ENCODE measurements at regions of chr5 and their contacts with region 1.

Region 1: DNA sequence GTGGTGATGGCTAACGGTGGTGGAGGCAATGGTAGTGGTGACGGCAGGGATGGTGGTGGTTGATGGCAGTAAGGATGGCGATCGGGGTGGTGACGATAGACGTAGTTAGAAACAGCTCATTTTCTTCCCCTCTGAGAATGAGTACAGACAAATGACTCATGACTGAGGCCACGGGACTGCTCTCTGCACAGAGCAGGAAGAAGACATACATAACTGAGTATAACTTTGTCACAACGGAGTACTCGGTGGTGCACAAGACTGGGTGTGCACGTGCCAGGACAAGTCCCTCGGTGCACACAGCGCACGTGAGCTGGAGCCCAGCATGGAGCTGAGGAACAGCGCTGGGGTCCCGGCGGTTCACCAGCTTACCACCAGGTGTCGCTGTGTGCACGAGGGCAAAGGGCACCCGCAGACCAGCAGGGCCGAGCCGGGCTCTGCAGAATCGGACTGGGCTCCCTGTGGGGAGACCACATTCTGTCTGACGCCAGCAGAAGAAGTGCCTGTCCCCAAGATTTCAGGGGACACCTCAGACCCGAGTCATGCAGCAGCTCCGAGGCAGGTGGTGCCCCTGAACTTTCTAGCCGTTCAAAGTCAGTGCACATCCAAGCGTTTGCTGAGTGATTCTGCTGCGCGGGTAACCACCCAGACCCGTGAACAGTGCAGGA is 188.6 kb downstream of the FSTL4 start:
- DNase-seq: peak in 4 of 5 donors; percentile 18 to 59 (median 35)
- H3K4me3 ChIP-seq: no peak overlapping the region
- H3K27ac ChIP-seq: no peak overlapping the region
- H3K4me1 ChIP-seq: no peaks in the 10 kb centered on the region
- H3K27me3 ChIP-seq: no peaks in the 10 kb centered on the region
- CTCF ChIP-seq: peak in 2 of 3 donors; percentile 24 to 33
- EP300 ChIP-seq: no peak
- POLR2A ChIP-seq: no peak

Region 2: DNA sequence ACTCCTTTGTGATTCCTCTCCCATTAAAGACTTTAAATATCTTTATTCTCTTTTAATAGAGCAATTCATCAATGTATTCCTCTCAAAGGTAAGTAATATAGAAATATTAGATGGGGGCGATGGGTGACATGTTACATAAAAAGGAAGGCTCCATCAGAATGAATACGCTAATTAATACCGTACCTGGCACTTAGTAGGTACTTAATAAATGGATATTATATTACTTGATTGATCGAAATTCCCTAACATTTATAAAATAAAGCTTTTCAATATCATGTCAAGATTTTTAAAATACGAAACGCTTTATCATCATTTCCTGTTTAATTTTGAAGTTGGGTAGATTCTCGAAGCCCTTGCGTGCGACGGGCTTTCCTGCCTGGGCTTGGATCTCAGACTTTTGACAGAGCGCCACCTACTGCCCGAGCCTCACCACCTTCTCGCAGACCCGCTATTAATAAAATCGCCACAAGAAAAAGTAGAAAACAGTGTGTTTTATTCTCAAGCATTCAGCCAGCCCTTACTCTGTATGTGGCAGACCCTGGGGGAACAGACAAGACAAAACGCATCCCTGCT is 445.3 kb after region 1 on chr5:
- intact Hi-C with region 1: loop called in 2 of 4 experiments (anchors 10 kb)
- DNase-seq: peak; percentile 45 to 78 (median 64)
- H3K4me3 ChIP-seq: no peak overlapping the region
- H3K27ac ChIP-seq: no peak overlapping the region
- H3K4me1 ChIP-seq: no peaks in the 10 kb centered on the region
- H3K27me3 ChIP-seq: no peaks in the 10 kb centered on the region
- CTCF ChIP-seq: no peak
- EP300 ChIP-seq: no peak
- POLR2A ChIP-seq: no peak